ENCODE measurements at regions of chrX and their contacts with region 1.

Region 1: DNA sequence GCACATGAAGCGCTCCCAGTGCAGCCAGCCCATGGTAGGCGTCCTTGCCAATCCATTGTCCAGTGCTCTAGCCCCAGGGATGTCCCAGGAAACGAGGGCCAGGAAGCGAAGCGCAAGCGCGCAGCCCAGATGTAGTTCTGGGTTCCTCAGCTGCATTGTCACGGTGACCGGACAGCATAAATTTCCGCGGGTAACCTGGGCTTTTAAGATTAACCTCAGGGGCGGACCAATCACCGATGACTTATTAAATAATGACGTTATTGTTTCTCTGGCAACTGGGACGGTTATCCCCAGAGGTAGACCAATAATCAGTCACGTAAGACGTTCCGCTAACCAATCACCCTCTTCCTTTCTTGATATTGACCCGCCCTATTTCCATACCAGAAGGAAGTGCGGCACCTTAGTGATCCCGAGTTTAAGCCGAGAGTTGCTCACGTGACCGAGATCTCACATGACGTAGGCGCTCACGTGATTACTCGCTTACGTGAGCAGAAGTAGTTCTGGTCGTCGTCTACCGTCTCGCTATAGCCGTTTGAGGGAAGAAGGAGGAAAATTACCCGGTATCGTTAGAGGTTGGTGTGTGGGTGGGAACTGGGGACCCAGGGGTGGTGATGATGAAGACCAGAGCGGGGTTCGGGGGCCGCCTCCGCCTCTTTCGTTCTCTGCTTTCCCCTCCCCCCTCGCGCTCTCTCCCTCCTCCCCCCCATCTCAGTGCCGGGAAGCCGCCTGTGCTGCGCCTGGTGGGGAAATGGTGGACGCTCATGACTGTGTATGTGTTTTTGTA is at the starts of genes GLA and HNRNPH2:
- DNase-seq: peak; percentile 97
- ATAC-seq: peak; percentile 94
- H3K4me3 ChIP-seq: peak within 1 kb of the TSS; percentile 68 to 82 (median 79)
- H3K27ac ChIP-seq: peak within 1 kb of the TSS; percentile 97
- H3K4me1 ChIP-seq: peaks cover 8% of the 10 kb centered on the region
- H3K27me3 ChIP-seq: no peaks in the 10 kb centered on the region
- CTCF ChIP-seq: no peak
- EP300 ChIP-seq: no peak
- POLR2A ChIP-seq: peak; percentile 70 to 90
- RAD21 ChIP-seq: no peak
- total RNA-seq, gene GLA: 33.3 and 59.3 TPM in 2 replicates
- total RNA-seq, gene HNRNPH2: 56.9 and 80.1 TPM in 2 replicates

Region 2: GRCh38 chrX:101348452-101349192 is 59.3 kb before region 1 on chrX and contains the start of gene TIMM8A:
- CTCF ChIA-PET with region 1: no interaction called
- POLR2A ChIA-PET with region 1: no interaction called
- in situ Hi-C with region 1: no loop called
- intact Hi-C with region 1: loop called (anchors 5 kb)
- DNase-seq: peak; percentile 65
- ATAC-seq: peak; percentile 98
- H3K4me3 ChIP-seq: peak within 1 kb of the TSS; percentile 66 to 75 (median 71)
- H3K27ac ChIP-seq: peak within 1 kb of the TSS; percentile 85
- H3K4me1 ChIP-seq: 0 out of 2 replicates have a peak, but pooled peaks cover 8% of the 10 kb centered on the region
- H3K27me3 ChIP-seq: no peaks in the 10 kb centered on the region
- CTCF ChIP-seq: no peak
- EP300 ChIP-seq: no peak
- POLR2A ChIP-seq: peak; percentile 79 to 90
- RAD21 ChIP-seq: no peak
- total RNA-seq, gene TIMM8A: 25.5 and 36.6 TPM in 2 replicates